Left ventricle myocardium superior (tissue), 1 donor: ENCODE measurements at regions of chr15 and their contacts with region 1.

Region 1: DNA sequence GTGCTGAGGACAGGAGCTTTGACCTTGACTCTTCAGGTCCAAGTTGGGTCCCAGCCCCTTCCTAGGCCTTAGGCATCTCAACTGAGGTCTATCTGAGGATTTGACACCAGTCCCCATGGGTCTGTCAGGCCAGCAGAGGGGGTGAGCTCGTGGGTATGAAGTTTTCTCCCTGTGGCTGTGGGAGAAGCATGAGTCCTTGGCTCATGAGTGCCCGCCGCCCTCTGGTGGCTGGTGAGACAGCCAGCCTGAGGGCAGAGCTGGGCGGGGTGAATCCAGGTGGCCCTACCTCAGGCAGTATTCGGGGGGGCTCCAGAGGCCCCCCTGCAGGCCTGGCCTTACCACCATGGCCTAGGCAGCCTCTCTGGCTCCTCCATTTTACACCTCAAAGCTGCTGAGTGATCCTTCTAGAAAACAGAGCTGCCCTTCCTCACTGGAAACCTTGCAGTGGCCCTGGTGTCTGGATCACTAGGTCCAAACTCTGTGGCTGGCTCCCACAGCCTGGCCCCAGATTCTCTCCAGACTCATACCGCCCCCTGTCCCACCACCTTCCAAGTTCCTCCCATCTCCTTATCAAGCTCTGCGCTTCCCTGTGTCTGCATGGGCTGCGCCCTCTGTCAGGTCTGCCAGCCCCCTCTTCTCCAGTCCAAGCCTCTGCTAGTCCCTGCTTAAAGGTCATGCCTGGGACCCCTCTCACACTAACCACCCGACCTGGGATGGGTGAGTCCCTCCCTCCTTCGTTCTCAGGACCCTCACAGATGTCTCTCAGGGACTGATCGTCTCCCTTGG is 16.1 kb downstream of the SH2D7 start:
- DNase-seq: peak; percentile 92
- ATAC-seq: peak; percentile 91

Region 2: GRCh38 chr15:77966540-77967290 is 141.8 kb before region 1 on chr15:
- intact Hi-C with region 1: loop called (anchors 5 kb)
- DNase-seq: no peak
- ATAC-seq: peak; percentile 82

Region 3: GRCh38 chr15:78093242-78094020 is 15.1 kb before region 1 on chr15:
- intact Hi-C with region 1: no loop called
- DNase-seq: no peak
- ATAC-seq: peak; percentile 88

Region 4: GRCh38 chr15:78195735-78196201 is 87.3 kb after region 1 on chr15:
- intact Hi-C with region 1: loop called (anchors 5 kb)
- DNase-seq: no peak
- ATAC-seq: peak; percentile 87

Region 5: DNA sequence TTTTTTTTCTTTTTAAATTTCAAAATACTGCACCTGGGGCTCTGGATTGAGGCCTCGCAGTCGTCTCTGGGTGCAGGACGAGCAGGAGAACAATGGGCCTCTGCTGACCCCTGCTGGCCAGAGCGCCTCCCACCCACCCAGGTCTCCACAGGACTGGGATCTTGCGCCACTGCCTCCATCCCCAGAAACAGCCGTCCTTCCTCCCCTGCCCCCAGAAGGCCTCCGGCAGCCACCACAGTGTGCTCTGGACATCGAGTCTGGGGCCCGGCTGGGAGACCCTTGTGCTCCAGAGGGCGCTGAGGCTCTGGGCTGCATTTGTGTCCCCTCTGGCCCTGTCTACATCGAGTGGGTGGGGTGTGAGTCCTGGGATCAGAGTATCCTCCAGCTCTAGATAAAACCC is 132.5 kb after region 1 on chr15:
- intact Hi-C with region 1: loop called (anchors 5 kb)
- DNase-seq: peak; percentile 92
- ATAC-seq: peak; percentile 95

Region 6: GRCh38 chr15:78422571-78423340 is 314.3 kb after region 1 on chr15:
- intact Hi-C with region 1: loop called (anchors 10 kb)
- DNase-seq: peak; percentile 74
- ATAC-seq: peak; percentile 71